GM10248 (cell line): ENCODE measurements at regions of chr6 and their contacts with region 1.

Region 1: GRCh38 chr6:137944793-137945498 is 77.9 kb downstream of the TNFAIP3 start:
- DNase-seq: peak; percentile 45
- CTCF ChIP-seq: peak; percentile 55

Region 2: GRCh38 chr6:137722749-137723272 is 222.1 kb before region 1 on chr6:
- CTCF ChIA-PET with region 1: interaction called, 11 read pairs
- POLR2A ChIA-PET with region 1: no interaction called
- DNase-seq: peak; percentile 31
- CTCF ChIP-seq: no peak

Region 3: GRCh38 chr6:137846772-137847313 is 98.1 kb before region 1 on chr6:
- CTCF ChIA-PET with region 1: no interaction called
- POLR2A ChIA-PET with region 1: no interaction called
- DNase-seq: no peak
- CTCF ChIP-seq: no peak

Region 4: GRCh38 chr6:137859025-137859424 is 85.9 kb before region 1 on chr6:
- CTCF ChIA-PET with region 1: no interaction called
- POLR2A ChIA-PET with region 1: no interaction called
- DNase-seq: no peak
- CTCF ChIP-seq: no peak

Region 5: GRCh38 chr6:137873273-137873762 is 71.6 kb before region 1 on chr6:
- CTCF ChIA-PET with region 1: interaction called, 138 read pairs
- POLR2A ChIA-PET with region 1: interaction called, 10 read pairs
- DNase-seq: peak; percentile 54
- CTCF ChIP-seq: no peak

Region 6: DNA sequence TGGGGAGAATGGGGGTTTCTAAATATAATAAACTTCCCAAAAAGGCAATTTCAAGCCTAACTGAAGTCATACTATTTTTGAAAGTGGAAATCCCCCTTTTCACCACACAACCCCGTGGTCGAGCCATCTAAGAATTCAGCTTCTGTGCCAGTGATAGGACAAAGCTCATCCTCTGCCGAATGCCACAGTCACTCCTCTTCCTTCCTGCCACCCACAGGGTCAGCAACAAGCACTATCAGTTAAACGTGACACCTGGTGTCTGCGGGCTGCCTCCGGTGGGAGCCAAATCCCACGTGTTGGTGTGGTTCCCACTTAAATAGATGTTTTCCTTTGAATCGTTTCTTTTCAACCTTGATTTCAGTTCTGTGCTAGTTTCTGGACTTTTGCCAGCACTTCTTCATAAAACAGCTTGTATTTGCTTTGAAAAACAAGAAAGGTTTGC is 17.1 kb before region 1 on chr6:
- CTCF ChIA-PET with region 1: interaction called, 97 read pairs
- POLR2A ChIA-PET with region 1: no interaction called
- DNase-seq: peak; percentile 54
- CTCF ChIP-seq: no peak

Region 7: GRCh38 chr6:137967689-137968454 is 22.9 kb after region 1 on chr6:
- CTCF ChIA-PET with region 1: interaction called, 21 read pairs
- POLR2A ChIA-PET with region 1: no interaction called
- DNase-seq: no peak
- CTCF ChIP-seq: no peak

Region 8: GRCh38 chr6:138387597-138388368 is 442.8 kb after region 1 on chr6:
- CTCF ChIA-PET with region 1: no interaction called
- POLR2A ChIA-PET with region 1: no interaction called
- DNase-seq: no peak
- CTCF ChIP-seq: no peak